T-cell (primary cell): ENCODE measurements at regions of chr1 and their contacts with region 1.

Region 1: DNA sequence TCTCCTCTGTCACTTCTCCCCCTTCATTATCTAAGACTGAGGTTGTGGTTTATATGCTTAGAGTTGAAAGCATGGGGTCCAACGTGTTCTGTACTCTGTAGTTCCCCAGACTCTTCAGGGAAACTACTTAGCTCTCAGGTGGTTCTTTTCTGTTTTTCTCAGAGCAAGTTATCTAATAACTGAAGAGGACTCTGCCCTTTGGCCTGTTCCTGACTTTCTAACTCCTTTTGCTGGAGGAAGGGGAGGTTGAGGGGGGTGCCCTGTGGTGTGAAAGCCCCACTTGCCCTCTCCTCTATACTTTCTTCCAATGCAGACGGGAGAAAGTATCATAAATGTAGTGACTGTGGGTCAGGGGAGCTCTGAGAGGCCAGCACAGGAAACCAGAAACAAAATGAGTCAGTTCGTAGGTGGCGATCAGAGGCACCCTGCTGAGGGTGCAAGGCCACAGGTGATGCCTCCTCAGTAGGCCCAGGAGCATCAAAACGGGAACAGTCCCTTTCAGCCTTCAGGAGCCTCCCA is 5.0 kb downstream of the SLC25A44 start:
- DNase-seq: no peak
- ATAC-seq: no peak
- H3K4me3 ChIP-seq: no peak overlapping the region
- H3K4me3 Mint-ChIP-seq: no peak overlapping the region
- H3K27ac ChIP-seq: peak overlapping the region; percentile 35
- H3K27ac Mint-ChIP-seq: peak overlapping the region; percentile 62 to 79
- H3K4me1 ChIP-seq: peaks cover 5 to 53% of the 10 kb centered on the region in 2 experiments
- H3K4me1 Mint-ChIP-seq: peaks cover 62 to 63% (median 62%) of the 10 kb centered on the region in 3 donors
- H3K27me3 ChIP-seq: no peaks in the 10 kb centered on the region
- H3K27me3 Mint-ChIP-seq: no peaks in the 10 kb centered on the region

Region 2: DNA sequence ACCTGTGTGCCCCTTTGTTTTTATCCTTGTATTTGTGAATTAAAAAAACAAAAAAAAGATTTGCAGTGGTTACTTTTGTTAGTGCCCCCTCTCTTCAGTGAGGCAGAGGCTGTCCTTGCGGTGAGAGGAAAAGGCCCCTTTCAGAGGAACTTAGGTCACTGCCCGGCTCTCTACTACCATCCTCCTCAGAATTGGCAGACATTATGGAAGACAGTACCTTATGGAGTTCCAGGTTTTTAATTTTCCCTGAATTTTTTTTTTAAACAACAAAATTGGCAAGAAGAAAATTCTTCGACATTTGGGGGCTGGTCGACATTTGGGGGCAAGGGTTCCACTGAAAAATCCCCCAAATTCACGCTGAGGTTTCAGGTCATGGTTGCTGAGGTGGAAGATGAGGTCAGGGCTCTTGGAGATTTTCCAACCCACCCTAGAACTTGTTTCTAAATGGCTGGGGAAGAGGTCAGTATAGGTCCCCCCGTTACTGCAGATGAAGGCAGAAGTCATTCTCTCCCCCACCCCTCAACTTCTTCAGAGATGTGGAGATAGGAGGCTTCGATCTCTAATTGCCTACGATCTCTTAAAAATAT is 252.2 kb before region 1 on chr1:
- CTCF ChIA-PET with region 1: no interaction called
- POLR2A ChIA-PET with region 1: no interaction called
- DNase-seq: no peak
- ATAC-seq: no peak
- H3K4me3 ChIP-seq: no peak overlapping the region
- H3K4me3 Mint-ChIP-seq: peak overlapping the region in 1 of 3 donors; percentile 66
- H3K27ac ChIP-seq: peak overlapping the region; percentile 79
- H3K27ac Mint-ChIP-seq: peak overlapping the region; percentile 87 to 89
- H3K4me1 ChIP-seq: peaks cover 14 to 48% of the 10 kb centered on the region in 2 experiments
- H3K4me1 Mint-ChIP-seq: peaks cover 37 to 51% (median 44%) of the 10 kb centered on the region in 3 donors
- H3K27me3 ChIP-seq: no peaks in the 10 kb centered on the region
- H3K27me3 Mint-ChIP-seq: no peaks in the 10 kb centered on the region

Region 3: GRCh38 chr1:156176610-156177210 is 22.2 kb before region 1 on chr1:
- CTCF ChIA-PET with region 1: interaction called in 1 of 2 experiments, 4 read pairs
- POLR2A ChIA-PET with region 1: interaction called in 1 of 2 experiments, 11 read pairs
- DNase-seq: no peak
- ATAC-seq: no peak
- H3K4me3 ChIP-seq: no peak overlapping the region
- H3K4me3 Mint-ChIP-seq: no peak overlapping the region
- H3K27ac ChIP-seq: no peak overlapping the region
- H3K27ac Mint-ChIP-seq: no peak overlapping the region
- H3K4me1 ChIP-seq: peaks cover 7 to 15% of the 10 kb centered on the region in 2 experiments
- H3K4me1 Mint-ChIP-seq: peaks cover 7 to 19% (median 10%) of the 10 kb centered on the region in 3 donors
- H3K27me3 ChIP-seq: peaks cover 0 to 17% of the 10 kb centered on the region in 2 experiments
- H3K27me3 Mint-ChIP-seq: peaks cover 0 to 3% of the 10 kb centered on the region in 2 donors

Region 4: GRCh38 chr1:156401681-156402081 is 202.8 kb after region 1 on chr1:
- CTCF ChIA-PET with region 1: no interaction called
- POLR2A ChIA-PET with region 1: no interaction called
- DNase-seq: no peak
- ATAC-seq: no peak
- H3K4me3 ChIP-seq: no peak overlapping the region
- H3K4me3 Mint-ChIP-seq: no peak overlapping the region
- H3K27ac ChIP-seq: no peak overlapping the region
- H3K27ac Mint-ChIP-seq: no peak overlapping the region
- H3K4me1 ChIP-seq: no peaks in the 10 kb centered on the region
- H3K4me1 Mint-ChIP-seq: no peaks in the 10 kb centered on the region
- H3K27me3 ChIP-seq: peaks cover 6 to 56% of the 10 kb centered on the region in 2 experiments
- H3K27me3 Mint-ChIP-seq: peaks cover 20 to 30% of the 10 kb centered on the region in 2 donors